Ovary (tissue), 10 donors: ENCODE measurements at regions of chr3 and their contacts with region 1.

Region 1: DNA sequence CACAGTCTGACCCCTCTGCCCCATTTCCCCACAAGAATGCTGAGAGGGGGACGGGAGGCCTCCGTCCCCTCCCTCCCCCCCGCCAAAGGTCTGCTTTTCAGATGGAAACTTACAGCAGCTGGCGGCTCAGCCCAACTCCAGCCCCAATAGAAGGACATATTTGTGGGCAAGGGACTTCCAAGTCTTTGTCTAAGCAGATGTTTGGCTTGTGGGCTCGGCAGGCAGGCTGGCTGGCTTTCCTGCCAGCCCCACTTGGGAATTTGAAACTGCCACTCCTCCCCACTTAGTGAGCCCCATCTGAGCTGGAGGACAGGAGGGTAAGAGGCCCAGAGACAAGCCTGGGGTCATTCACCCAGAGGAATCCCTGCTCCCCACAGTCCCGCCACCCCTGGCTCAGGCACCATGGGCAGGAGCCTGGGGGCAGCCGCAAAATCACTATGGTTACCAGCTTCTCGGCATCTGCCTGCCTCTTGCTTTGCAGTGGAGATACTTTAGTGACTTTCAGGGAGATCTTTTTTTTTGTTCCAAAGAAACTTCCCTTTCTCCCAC is 53.6 kb downstream of the LMCD1 start:
- DNase-seq: peak; percentile 35 to 60 (median 48)
- H3K4me3 ChIP-seq: no peak overlapping the region
- H3K27ac ChIP-seq: peak overlapping the region; percentile 46 to 67
- H3K4me1 ChIP-seq: peaks cover 32% of the 10 kb centered on the region
- H3K27me3 ChIP-seq: no peaks in the 10 kb centered on the region
- CTCF ChIP-seq: no peak
- EP300 ChIP-seq: no peak
- POLR2A ChIP-seq: no peak

Region 2: GRCh38 chr3:8501371-8502131 is 53.6 kb before region 1 on chr3 and contains the start of gene LMCD1:
- intact Hi-C with region 1: loop called in 2 of 4 experiments (anchors 10 kb)
- DNase-seq: peak; percentile 94 to 97 (median 95)
- H3K4me3 ChIP-seq: peak within 1 kb of the TSS; percentile 50
- H3K27ac ChIP-seq: peak within 1 kb of the TSS; percentile 34 to 88
- H3K4me1 ChIP-seq: peaks cover 18% of the 10 kb centered on the region
- H3K27me3 ChIP-seq: no peaks in the 10 kb centered on the region
- CTCF ChIP-seq: peak; percentile 22 to 38 (median 22)
- EP300 ChIP-seq: peak; percentile 19
- POLR2A ChIP-seq: peak; percentile 65
- total RNA-seq, gene LMCD1: 42.1 to 146 (median 124) TPM